A673 (cell line): ENCODE measurements at regions of chr16 and their contacts with region 1.

Region 1: DNA sequence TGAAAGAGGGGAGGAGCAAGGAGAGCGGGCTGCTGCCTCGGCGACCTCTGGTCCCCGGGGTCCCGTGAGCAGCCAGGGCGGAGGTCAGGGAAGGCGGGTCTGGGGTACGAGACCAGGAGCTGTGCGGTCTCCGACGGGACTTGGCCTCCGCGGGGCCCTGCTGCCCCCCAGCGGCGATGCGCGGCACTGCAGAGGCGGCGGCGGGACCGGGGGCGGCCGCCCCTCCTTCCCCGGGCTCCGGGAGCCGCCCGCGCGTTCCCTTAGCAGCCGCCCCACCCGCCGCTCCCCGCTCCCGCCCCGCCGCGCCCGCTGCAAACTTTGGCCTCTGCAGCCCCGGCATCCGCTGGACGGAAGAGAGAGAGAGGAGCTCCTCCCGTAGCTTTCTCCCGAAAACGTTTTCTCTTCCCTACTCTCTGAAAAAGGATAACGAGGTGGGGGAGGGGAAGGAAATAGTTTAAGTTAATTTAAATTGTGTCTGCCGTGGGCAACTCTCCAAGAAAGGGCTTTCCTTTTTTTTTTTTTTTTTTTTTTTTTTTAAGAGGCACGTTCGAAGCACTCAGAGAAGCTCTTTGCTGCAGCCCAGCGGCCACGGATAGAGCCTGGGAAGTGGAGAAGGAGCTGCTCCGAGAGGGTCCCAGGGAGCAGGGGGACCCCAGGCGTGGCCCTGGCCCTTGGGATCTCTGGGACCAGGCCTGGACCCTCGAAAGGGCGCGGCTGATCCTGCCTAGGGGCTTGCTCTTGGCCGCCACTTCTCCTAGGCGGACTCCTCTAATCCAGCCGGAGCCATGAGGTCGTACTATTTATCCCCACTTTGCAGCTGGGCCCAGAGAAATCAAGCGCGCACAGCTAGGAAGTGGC is 43.2 kb downstream of the C16orf82 start:
- DNase-seq: peak; percentile 85
- H3K4me3 ChIP-seq: peak overlapping the region; percentile 55
- H3K27ac ChIP-seq: peak overlapping the region; percentile 38
- H3K4me1 ChIP-seq: peaks cover 5% of the 10 kb centered on the region
- H3K27me3 ChIP-seq: no peaks in the 10 kb centered on the region
- CTCF ChIP-seq: peak; percentile 52

Region 2: DNA sequence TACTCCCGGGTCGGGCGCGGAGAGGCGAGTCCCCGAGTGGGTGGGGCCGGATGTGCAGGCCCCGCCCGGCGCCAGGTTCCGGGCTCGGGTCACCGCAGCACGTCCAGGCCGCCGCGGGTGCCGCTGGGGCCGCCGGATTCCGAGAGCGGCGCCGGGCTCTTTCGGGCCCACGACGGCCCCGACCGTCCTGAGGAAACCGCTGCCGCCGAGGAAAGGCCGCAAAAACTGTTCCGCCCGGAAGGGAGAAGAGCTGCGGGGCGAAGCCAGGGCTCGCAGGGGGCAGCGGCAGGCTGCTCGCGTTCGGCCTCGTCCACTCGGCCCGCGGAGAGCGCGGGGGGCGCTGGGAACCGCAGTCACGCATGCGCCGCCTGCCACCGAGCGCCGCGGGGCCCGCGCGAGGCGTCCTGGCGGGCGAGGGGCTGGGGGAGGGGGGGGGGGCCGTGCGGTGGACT is 1852.4 kb before region 1 on chr16 and contains the start of gene ZKSCAN2:
- CTCF ChIA-PET with region 1: interaction called, 11 read pairs
- POLR2A ChIA-PET with region 1: no interaction called
- intact Hi-C with region 1: no loop called
- DNase-seq: peak; percentile 88
- H3K4me3 ChIP-seq: peak within 1 kb of the TSS; percentile 91
- H3K27ac ChIP-seq: peak within 1 kb of the TSS; percentile 98
- H3K4me1 ChIP-seq: peaks cover 10% of the 10 kb centered on the region
- H3K27me3 ChIP-seq: no peaks in the 10 kb centered on the region
- CTCF ChIP-seq: no peak
- total RNA-seq, gene ZKSCAN2: 16.4 and 17.0 TPM in 2 replicates

Region 3: GRCh38 chr16:25691519-25692091 is 1418.3 kb before region 1 on chr16 and contains the start of gene HS3ST4:
- CTCF ChIA-PET with region 1: interaction called, 11 read pairs
- POLR2A ChIA-PET with region 1: no interaction called
- intact Hi-C with region 1: loop called (anchors 10 kb)
- DNase-seq: peak; percentile 85
- H3K4me3 ChIP-seq: peak within 1 kb of the TSS; percentile 75
- H3K27ac ChIP-seq: peak within 1 kb of the TSS; percentile 74
- H3K4me1 ChIP-seq: peaks cover 42% of the 10 kb centered on the region
- H3K27me3 ChIP-seq: no peaks in the 10 kb centered on the region
- CTCF ChIP-seq: no peak
- total RNA-seq, gene HS3ST4: 33.5 and 34.0 TPM in 2 replicates

Region 4: DNA sequence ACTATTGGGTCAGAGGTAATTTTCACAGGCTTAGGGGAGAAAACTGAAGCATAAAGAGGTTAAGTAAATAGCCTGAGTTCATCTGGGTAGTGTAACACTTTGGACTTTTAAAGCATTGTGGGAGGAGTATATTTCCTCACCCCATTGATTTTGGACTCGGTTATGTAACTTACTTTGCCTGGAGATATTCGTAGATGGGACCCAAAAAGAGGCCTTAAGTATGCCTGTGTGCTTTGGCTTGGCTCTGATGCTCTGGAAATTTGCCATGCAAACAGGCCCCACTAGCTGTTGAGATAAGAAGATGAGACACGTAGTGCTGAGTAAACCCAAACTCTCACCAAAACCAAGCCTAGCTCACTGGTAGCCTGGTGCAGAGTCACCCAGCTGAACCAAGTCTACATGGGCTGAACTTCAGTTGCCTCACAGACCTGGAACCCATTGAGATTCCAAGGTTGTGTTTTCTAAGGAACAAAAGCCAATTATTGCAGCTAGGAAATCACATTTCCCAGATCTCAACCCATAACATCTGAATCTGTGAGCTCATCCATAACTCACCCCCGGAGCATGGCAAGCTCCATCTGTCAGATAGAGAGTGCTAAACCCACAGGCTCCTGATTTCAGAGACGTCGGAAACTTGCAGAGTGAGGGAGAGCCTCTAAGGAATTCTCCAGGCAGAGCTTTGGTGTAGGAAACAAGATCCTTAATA is 579.2 kb before region 1 on chr16:
- CTCF ChIA-PET with region 1: interaction called, 16 read pairs
- POLR2A ChIA-PET with region 1: no interaction called
- intact Hi-C with region 1: no loop called
- DNase-seq: no peak
- H3K4me3 ChIP-seq: no peak overlapping the region
- H3K27ac ChIP-seq: no peak overlapping the region
- H3K4me1 ChIP-seq: no peaks in the 10 kb centered on the region
- H3K27me3 ChIP-seq: peaks cover 7% of the 10 kb centered on the region
- CTCF ChIP-seq: no peak

Region 5: GRCh38 chr16:26645614-26646013 is 464.3 kb before region 1 on chr16:
- CTCF ChIA-PET with region 1: interaction called, 21 read pairs
- POLR2A ChIA-PET with region 1: no interaction called
- intact Hi-C with region 1: no loop called
- DNase-seq: peak; percentile 73
- H3K4me3 ChIP-seq: no peak overlapping the region
- H3K27ac ChIP-seq: no peak overlapping the region
- H3K4me1 ChIP-seq: peaks cover 10% of the 10 kb centered on the region
- H3K27me3 ChIP-seq: no peaks in the 10 kb centered on the region
- CTCF ChIP-seq: peak; percentile 93

Region 6: DNA sequence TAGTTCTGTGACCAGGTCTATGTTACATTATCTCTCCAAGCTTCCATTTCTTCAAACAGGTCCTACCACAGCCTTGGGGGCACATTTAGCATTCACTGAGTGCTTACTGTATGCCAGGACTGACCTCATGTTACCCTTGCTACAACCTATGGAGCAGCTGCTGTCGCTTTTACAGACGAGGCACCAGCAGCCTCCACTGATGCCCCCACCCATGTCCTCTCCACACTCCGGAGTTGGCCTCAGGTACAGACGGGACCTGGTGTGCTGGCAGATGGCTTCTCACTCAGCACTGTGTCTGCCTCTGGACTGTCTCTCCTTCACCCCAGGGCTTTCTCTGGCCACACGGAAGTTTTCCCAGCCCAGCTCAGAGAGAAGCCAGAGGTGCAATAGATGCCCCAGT is 54.6 kb before region 1 on chr16:
- CTCF ChIA-PET with region 1: interaction called, 10 read pairs
- POLR2A ChIA-PET with region 1: no interaction called
- intact Hi-C with region 1: no loop called
- DNase-seq: no peak
- H3K4me3 ChIP-seq: no peak overlapping the region
- H3K27ac ChIP-seq: no peak overlapping the region
- H3K4me1 ChIP-seq: no peaks in the 10 kb centered on the region
- H3K27me3 ChIP-seq: peaks cover 13% of the 10 kb centered on the region
- CTCF ChIP-seq: no peak